PC-3 (cell line): ENCODE measurements at regions of chr20 and their contacts with region 1.

Region 1: DNA sequence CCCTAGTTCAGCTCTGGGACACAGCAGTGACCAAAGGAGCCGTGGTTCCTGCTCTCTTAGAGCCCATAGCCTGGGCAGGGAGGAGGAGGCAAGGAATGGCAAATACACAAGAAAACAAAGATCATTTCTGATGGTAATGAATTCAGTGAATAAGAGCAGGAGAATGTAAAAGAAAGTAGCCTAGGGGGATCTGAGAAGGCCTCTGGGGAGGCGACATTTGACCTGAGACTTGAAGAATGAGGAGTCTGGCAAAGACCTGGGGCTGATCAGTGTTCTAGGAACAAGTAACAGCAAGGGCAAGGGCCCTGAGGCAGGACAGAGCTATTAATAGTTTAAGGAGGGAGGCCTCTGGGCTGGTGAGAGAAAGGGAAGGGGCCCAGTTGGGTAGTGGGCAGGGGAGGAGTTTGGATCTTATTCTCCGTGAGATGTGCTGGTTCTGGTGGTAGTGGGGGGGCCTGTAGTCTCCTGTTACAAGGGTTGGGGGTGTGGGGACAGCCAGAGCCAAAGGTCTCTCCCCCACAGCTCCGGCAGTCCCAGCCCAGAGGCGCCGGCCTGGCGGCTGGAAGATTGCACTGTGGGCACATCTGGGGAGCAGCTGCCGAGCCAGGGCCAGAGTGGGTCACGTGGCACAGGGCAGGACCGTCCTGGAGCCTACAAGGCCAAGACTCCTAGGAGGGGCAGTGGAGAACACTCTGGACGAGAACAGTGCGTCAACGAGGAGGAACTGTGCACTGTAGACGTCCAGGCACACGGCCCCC is 9.3 kb upstream of the ID1 start:
- DNase-seq: peak; percentile 65
- ATAC-seq: no peak
- H3K4me3 ChIP-seq: no peak overlapping the region
- H3K27ac ChIP-seq: peak overlapping the region; percentile 84
- H3K4me1 ChIP-seq: peaks cover 28% of the 10 kb centered on the region
- H3K27me3 ChIP-seq: no peaks in the 10 kb centered on the region
- CTCF ChIP-seq: no peak

Region 2: DNA sequence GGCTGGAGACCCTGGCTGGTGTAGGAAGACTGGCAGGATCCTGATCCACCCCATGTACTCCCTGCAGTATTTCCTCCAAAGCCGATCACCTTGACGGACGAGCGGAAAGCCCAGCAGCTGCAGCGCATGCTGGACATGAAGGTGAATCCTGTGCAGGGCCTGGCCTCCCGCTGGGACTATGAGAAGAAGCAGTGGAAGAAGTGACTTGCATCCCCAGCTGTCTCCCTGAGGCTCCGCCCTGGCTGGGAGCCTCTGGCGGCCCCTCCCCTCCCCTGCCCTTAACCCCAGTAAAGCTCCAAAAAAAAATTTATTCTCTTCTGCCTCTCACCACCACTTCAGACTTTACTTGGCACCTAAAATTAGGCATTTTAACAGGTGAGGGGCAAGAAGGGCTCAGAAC is 48.9 kb after region 1 on chr20:
- CTCF ChIA-PET with region 1: no interaction called
- POLR2A ChIA-PET with region 1: no interaction called
- intact Hi-C with region 1: no loop called
- DNase-seq: no peak
- ATAC-seq: peak; percentile 37; the same call in 1 of the 2 replicates
- H3K4me3 ChIP-seq: no peak overlapping the region
- H3K27ac ChIP-seq: no peak overlapping the region
- H3K4me1 ChIP-seq: no peaks in the 10 kb centered on the region
- H3K27me3 ChIP-seq: no peaks in the 10 kb centered on the region
- CTCF ChIP-seq: no peak

Region 3: GRCh38 chr20:33415948-33416347 is 1820.1 kb after region 1 on chr20:
- CTCF ChIA-PET with region 1: no interaction called
- POLR2A ChIA-PET with region 1: no interaction called
- intact Hi-C with region 1: loop called (anchors 10 kb)
- DNase-seq: peak; percentile 44
- ATAC-seq: peak; percentile 67
- H3K4me3 ChIP-seq: no peak overlapping the region
- H3K27ac ChIP-seq: no peak overlapping the region
- H3K4me1 ChIP-seq: no peaks in the 10 kb centered on the region
- H3K27me3 ChIP-seq: no peaks in the 10 kb centered on the region
- CTCF ChIP-seq: peak; percentile 56